Activated CD8-positive, alpha-beta T cell treated with anti-CD3 and anti-CD28 coated beads, Interleukin-2, amount 10 ng/mL, durations not matched to agents 7 days and 5 days (primary cell): ENCODE measurements at regions of chr10 and their contacts with region 1.

Region 1: GRCh38 chr10:26881600-26882331 is 21.0 kb upstream of the ABI1 start:
- DNase-seq: no peak
- ATAC-seq: peak; percentile 76
- H3K4me3 Mint-ChIP-seq: no peak overlapping the region
- H3K27ac Mint-ChIP-seq: no peak overlapping the region
- H3K4me1 Mint-ChIP-seq: no peaks in the 10 kb centered on the region
- H3K27me3 Mint-ChIP-seq: peaks cover 18% of the 10 kb centered on the region

Region 2: DNA sequence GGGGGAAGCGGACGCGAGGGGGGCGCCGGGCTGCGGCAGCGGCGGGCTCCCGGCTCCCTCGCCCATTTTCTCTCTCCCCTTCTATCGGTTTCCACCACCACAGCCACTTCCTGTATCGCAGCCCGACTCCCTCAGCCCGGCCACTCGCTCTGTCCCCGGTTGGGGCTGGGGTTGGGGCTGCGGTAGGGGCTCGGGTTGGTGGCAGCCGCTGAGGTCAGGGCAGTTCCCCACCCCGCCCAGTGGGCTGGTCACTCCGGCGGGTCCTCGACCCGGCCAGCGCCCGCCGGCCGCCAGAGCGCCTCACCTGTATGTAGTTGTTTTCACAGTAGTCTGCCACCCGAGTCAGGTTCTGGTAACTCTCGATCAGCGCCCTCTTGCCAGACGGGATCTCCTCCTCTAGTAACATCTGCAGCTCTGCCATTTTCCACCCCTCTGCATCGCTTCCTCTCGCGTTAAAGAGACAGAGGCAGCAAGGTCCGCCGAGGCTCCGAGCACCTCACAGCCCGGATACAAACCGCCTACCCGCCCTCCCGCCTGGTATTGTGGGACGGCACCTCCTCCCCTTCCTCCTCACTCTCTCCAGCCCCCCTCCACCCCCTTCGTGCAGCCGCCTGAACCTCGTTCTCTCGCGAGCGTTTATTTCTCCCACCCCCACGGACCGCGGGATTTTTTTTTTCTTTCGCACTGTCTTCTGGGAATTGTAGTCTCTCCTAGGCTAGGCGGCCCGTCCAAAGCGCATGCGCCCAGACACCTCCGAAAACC is 21.1 kb before region 1 on chr10 and contains the start of gene ABI1:
- CTCF ChIA-PET with region 1: interaction called, 23 read pairs
- POLR2A ChIA-PET with region 1: no interaction called
- DNase-seq: peak; percentile 99
- ATAC-seq: peak; percentile 90
- H3K4me3 Mint-ChIP-seq: peak within 1 kb of the TSS; percentile 95
- H3K27ac Mint-ChIP-seq: peak within 1 kb of the TSS; percentile 100
- H3K4me1 Mint-ChIP-seq: peaks cover 30% of the 10 kb centered on the region
- H3K27me3 Mint-ChIP-seq: peaks cover 10% of the 10 kb centered on the region
- total RNA-seq, gene ABI1: 46.9 to 49.7 TPM

Region 3: GRCh38 chr10:26869528-26869927 is 12.2 kb before region 1 on chr10:
- CTCF ChIA-PET with region 1: interaction called, 11 read pairs
- POLR2A ChIA-PET with region 1: no interaction called
- DNase-seq: no peak
- ATAC-seq: no peak
- H3K4me3 Mint-ChIP-seq: peak overlapping the region; percentile 5
- H3K27ac Mint-ChIP-seq: no peak overlapping the region
- H3K4me1 Mint-ChIP-seq: peaks cover 6% of the 10 kb centered on the region
- H3K27me3 Mint-ChIP-seq: peaks cover 14% of the 10 kb centered on the region